CD8-positive, alpha-beta memory T cell (primary cell): ENCODE measurements at regions of chr1 and their contacts with region 1.

Region 1: GRCh38 chr1:25895365-25895993 is 10.7 kb downstream of the STMN1 start:
- DNase-seq: peak; percentile 85 to 93 (median 90)
- H3K4me3 ChIP-seq: no peak overlapping the region
- H3K4me3 Mint-ChIP-seq: no peak overlapping the region
- H3K27ac ChIP-seq: no peak overlapping the region
- H3K27ac Mint-ChIP-seq: peak overlapping the region in 5 of 8 donors; percentile 21 to 64 (median 48)
- H3K4me1 ChIP-seq: peaks cover 5% of the 10 kb centered on the region
- H3K4me1 Mint-ChIP-seq: peaks cover 7 to 9% (median 9%) of the 10 kb centered on the region in 3 donors
- H3K27me3 ChIP-seq: no peaks in the 10 kb centered on the region
- H3K27me3 Mint-ChIP-seq: no peaks in the 10 kb centered on the region

Region 2: DNA sequence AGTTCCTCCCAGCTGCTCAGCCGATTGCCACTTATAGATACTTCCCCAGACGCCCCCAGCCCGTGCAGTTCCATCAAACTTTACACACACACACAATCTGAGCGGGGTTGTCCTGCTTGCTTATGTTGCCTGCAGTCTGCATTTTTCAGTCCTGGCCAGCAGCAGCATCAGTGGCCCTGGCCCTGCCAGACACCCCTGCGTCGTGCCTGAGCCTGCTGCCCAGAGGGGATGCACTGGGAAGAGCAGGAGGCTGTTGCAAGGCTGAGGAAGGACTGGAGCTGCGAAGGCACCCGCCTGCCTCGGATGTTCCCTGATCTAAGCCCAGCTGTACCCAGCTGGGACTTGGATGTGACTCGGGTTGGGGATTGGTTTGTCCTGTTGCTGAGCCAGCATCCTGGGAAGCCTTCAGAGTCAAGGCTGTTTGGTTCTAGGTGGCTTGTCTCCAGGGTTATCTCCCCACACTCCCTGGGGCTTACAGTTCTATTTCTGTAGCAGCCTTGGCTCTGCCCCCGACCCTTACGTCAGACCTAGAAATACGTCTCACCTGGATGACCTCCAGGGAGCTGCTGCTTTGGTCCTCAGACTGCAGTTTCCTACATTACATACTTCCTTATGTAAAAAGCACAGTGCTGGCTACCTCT is 236.6 kb before region 1 on chr1:
- CTCF ChIA-PET with region 1: no interaction called
- POLR2A ChIA-PET with region 1: no interaction called
- DNase-seq: no peak
- H3K4me3 ChIP-seq: no peak overlapping the region
- H3K4me3 Mint-ChIP-seq: no peak overlapping the region
- H3K27ac ChIP-seq: no peak overlapping the region
- H3K27ac Mint-ChIP-seq: no peak overlapping the region
- H3K4me1 ChIP-seq: peaks cover 23% of the 10 kb centered on the region
- H3K4me1 Mint-ChIP-seq: peaks cover 1 to 5% (median 4%) of the 10 kb centered on the region in 3 donors
- H3K27me3 ChIP-seq: no peaks in the 10 kb centered on the region
- H3K27me3 Mint-ChIP-seq: peaks cover 0 to 2% of the 10 kb centered on the region in 2 donors

Region 3: DNA sequence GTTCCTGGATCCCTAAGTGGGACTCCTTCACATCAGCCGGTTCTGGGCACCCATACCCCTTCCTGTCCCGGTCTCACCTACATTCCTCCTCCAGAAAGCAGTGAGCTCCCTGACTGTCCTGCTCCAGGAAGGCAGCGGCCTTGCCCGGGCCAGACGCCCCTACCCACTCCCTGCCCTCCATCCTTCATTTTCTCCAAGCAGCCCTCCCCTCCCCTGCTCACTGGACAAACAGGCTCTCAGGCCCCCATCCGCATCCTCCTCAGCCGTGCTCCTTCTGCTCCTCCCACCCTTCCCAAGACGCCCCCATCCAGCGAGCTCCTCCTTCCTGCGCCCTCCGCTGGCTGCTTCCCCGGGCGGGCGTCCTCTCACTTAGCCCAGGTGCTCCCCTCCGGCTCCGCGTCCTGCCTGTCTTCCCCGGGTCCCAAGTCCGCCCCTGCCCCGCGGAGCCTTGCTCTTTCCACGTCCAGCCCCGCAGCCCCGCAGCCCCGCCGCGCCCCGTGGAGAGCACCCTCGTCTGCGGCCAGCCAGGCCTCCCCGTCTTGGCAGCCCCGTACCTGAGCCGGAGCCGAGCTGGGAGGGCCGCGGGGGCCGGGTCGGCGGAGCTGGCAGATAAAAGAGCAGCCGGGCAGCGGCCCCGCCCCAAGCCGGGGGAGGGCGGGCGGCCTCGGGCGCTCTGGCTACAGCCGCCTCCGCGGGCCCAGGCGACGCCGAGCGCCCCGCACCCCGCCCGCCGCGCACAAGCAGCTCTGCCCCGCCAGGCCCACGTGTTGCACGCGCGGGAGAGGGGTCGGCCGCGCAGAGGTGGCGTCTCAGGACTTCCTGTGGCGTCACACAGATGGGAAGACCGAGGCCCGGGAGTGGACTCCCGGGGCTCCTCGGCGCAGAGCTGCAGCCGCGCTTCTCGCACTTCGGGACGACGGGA is 20.3 kb before region 1 on chr1 and contains the start of gene PAQR7:
- CTCF ChIA-PET with region 1: interaction called, 10 read pairs
- POLR2A ChIA-PET with region 1: no interaction called
- DNase-seq: peak; percentile 43 to 71 (median 62)
- H3K4me3 ChIP-seq: peak within 1 kb of the TSS; percentile 50
- H3K4me3 Mint-ChIP-seq: peak within 1 kb of the TSS; percentile 81 to 93 (median 85)
- H3K27ac ChIP-seq: peak within 1 kb of the TSS; percentile 43
- H3K27ac Mint-ChIP-seq: peak within 1 kb of the TSS; percentile 31 to 96 (median 81)
- H3K4me1 ChIP-seq: peaks cover 11% of the 10 kb centered on the region
- H3K4me1 Mint-ChIP-seq: peaks cover 5 to 10% (median 8%) of the 10 kb centered on the region in 3 donors
- H3K27me3 ChIP-seq: no peaks in the 10 kb centered on the region
- H3K27me3 Mint-ChIP-seq: peaks cover 0 to 5% of the 10 kb centered on the region in 2 donors
- total RNA-seq, gene PAQR7: 7.9 to 8.1 TPM

Region 4: DNA sequence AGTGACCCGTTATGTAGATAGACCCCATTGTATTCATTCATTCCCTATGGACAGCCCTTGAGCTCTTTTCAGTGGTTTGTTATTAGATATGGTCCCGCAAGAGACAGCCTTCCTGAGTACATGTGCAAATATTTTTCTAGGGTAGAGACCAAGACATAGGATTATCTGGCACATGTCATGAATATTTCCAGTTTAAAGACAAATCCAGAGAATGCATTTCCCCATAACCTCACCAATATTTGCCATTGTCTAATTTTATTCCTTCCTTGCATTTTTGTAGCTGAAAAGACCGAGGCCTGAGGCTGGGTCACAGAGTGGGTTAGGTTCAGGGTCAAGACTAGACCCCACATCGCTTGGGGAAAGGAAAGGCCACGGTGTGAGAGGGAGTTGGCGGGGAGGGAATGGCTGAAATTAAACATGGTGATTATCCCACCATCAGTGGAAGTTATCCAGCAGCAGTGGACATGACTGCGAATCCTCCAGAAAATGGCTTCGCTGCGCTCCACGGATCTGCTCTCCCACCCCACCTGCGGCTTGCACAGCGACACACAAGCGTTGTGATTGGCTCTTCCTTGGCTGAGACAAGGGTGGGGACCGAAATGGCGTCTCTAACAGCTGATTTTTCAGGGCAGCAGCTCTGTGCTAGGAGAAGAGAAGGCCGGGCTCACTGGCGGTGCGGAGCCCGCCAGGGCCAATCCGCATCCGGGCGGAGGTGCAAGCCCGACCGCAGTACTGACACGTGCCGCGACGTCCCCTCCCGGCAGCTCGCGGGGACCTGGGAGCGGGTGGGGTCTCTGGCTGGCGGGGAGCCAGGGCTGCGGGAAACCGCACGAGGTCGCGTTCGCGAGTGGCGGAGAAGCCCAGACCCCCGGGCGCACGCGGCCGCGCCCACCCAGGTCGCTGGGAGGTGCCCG is 26.8 kb after region 1 on chr1:
- CTCF ChIA-PET with region 1: interaction called, 24 read pairs
- POLR2A ChIA-PET with region 1: interaction called, 6 read pairs
- DNase-seq: peak; percentile 31 to 75 (median 61)
- H3K4me3 ChIP-seq: peak overlapping the region; percentile 53
- H3K4me3 Mint-ChIP-seq: peak overlapping the region; percentile 84 to 95 (median 86)
- H3K27ac ChIP-seq: no peak overlapping the region
- H3K27ac Mint-ChIP-seq: peak overlapping the region; percentile 32 to 95 (median 72)
- H3K4me1 ChIP-seq: peaks cover 35% of the 10 kb centered on the region
- H3K4me1 Mint-ChIP-seq: peaks cover 27 to 36% (median 29%) of the 10 kb centered on the region in 3 donors
- H3K27me3 ChIP-seq: no peaks in the 10 kb centered on the region
- H3K27me3 Mint-ChIP-seq: no peaks in the 10 kb centered on the region

Region 5: DNA sequence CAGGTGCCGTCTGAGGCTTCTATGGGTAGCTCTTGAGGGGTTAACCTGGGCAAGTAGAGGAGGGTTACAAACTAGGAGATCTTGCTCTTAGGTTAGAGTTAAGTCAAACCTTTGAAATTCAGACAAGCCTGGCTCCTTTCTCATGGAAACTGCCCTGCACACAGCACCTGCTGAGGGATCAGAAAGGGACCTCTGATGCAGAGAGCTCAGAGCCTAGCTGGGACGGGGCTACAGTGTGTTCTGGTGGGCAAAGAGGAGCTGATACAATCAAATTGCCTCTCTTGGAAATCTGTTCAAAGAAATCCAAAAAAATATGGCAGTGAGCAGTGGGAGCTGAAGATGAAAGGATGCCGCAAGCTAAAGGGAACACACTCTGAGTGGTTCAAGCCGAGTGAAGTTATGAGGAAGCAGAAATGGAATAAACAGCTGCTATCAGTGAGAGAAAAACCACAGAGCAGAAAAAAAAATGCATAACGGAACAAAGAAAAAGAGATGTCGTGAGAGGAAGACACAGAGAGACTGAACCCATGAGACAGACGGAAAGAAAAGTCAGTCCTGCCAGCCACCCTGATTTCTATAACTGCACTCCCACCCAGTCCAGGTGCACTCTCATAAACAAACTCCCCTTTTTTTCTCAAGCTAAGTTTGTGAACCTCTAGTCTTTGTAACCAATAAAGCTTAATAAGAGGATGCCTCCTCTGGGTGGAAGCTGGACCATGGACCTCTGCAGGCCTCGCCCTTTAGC is 75.8 kb after region 1 on chr1:
- CTCF ChIA-PET with region 1: interaction called, 10 read pairs
- POLR2A ChIA-PET with region 1: interaction called, 4 read pairs
- DNase-seq: peak in 2 of 5 donors; percentile 3 to 65
- H3K4me3 ChIP-seq: peak overlapping the region; percentile 17
- H3K4me3 Mint-ChIP-seq: peak overlapping the region in 5 of 7 donors; percentile 21 to 49 (median 33)
- H3K27ac ChIP-seq: no peak overlapping the region
- H3K27ac Mint-ChIP-seq: peak overlapping the region; percentile 68 to 91 (median 84)
- H3K4me1 ChIP-seq: peaks cover 16% of the 10 kb centered on the region
- H3K4me1 Mint-ChIP-seq: peaks cover 22 to 48% (median 37%) of the 10 kb centered on the region in 3 donors
- H3K27me3 ChIP-seq: no peaks in the 10 kb centered on the region
- H3K27me3 Mint-ChIP-seq: peaks cover 0 to 1% of the 10 kb centered on the region in 2 donors

Region 6: GRCh38 chr1:25990702-25991395 is 95.4 kb after region 1 on chr1:
- CTCF ChIA-PET with region 1: interaction called, 204 read pairs
- POLR2A ChIA-PET with region 1: interaction called, 6 read pairs
- DNase-seq: peak; percentile 37 to 72 (median 57)
- H3K4me3 ChIP-seq: peak overlapping the region; percentile 81
- H3K4me3 Mint-ChIP-seq: peak overlapping the region; percentile 77 to 96 (median 91)
- H3K27ac ChIP-seq: peak overlapping the region; percentile 57
- H3K27ac Mint-ChIP-seq: peak overlapping the region; percentile 66 to 99 (median 95)
- H3K4me1 ChIP-seq: peaks cover 62% of the 10 kb centered on the region
- H3K4me1 Mint-ChIP-seq: peaks cover 63 to 79% (median 74%) of the 10 kb centered on the region in 3 donors
- H3K27me3 ChIP-seq: no peaks in the 10 kb centered on the region
- H3K27me3 Mint-ChIP-seq: no peaks in the 10 kb centered on the region